ENCODE measurements at regions of chr21 and their contacts with region 1.

Region 1: DNA sequence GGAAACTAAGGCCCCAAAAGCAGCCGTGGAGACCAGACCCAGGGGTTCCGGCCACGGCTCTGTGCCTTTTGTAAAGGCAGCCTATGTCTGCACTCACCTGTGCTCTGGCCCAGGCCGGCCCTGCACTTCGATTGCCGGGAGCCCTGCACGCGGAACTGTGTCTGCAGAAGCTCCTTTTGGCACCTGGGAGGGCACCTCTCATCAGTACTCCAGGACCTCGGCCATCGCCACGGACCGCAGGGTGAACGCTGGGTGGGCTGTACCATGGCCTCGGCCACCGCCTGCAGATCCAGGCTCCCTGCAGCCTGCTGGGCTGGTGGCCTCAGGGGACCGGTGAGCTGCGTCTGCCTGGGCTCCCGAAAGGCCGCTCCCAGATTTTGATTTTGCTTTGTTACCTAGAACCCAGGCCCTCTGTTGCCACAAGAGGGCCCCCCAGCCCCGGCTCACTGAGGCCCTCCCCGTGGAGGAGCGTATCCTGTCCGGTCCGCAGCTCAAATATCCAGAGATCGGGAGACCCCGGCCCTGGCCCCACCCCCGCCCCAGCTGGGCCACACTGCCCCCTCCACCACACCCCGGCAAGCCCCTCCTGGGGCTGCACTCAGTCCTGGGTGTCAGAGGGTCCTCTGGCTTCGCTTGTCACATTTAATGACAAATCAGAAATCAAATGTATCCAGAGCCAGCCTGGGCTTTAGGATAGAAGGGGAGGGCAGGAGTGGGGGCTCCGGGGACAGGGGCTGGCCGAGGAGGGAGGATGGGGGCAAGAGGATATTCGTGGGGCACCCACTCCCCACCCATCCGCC is 60.2 kb upstream of the PDE9A start:
- DNase-seq: peak; percentile 61

Region 2: GRCh38 chr21:42474043-42474831 is 119.0 kb before region 1 on chr21:
- in situ Hi-C with region 1: no loop called
- DNase-seq: no peak

Region 3: GRCh38 chr21:42833439-42833815 is 240.2 kb after region 1 on chr21:
- in situ Hi-C with region 1: loop called (anchors 25 kb)
- DNase-seq: peak; percentile 68

Measured in KBM-7 (cell line).